ENCODE measurements at regions of chr14 and their contacts with region 1.

Region 1: DNA sequence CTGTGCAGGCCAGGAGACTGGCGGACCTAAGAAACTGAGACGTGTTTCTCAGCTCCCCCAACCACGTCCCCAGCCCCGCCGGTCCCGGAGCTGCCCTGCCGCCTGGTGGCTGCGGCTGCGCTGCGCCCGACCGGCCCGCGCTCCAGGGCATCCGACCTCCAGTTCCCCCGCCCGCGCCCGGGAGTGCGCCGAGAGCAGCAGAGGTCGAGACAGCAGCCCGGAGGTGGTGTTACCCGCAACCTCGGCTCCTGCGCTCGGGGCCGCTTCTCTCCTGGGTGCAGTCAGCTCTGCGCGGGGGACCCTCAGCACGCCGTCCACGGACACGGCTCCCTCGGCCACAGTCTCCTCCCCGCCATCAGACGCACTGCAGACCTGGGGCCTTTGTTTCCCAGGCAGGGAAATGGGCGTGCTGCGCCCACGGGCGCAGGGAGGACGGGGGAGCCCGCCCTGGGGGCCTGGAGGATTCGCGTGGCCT is 21.6 kb upstream of the GPR132 start:
- DNase-seq: peak; percentile 90
- H3K4me3 Mint-ChIP-seq: peak overlapping the region; percentile 75
- H3K27ac Mint-ChIP-seq: peak overlapping the region; percentile 14
- H3K4me1 Mint-ChIP-seq: peaks cover 21% of the 10 kb centered on the region
- H3K27me3 Mint-ChIP-seq: peaks cover 69% of the 10 kb centered on the region

Region 2: GRCh38 chr14:105065280-105066228 is 21.3 kb before region 1 on chr14 and contains the start of gene GPR132:
- CTCF ChIA-PET with region 1: interaction called, 111 read pairs
- DNase-seq: peak; percentile 96
- H3K4me3 Mint-ChIP-seq: peak within 1 kb of the TSS; percentile 83
- H3K27ac Mint-ChIP-seq: peak within 1 kb of the TSS; percentile 96
- H3K4me1 Mint-ChIP-seq: peaks cover 91% of the 10 kb centered on the region
- H3K27me3 Mint-ChIP-seq: no peaks in the 10 kb centered on the region

Region 3: GRCh38 chr14:105075379-105076295 is 11.2 kb before region 1 on chr14:
- CTCF ChIA-PET with region 1: interaction called, 12 read pairs
- DNase-seq: peak; percentile 77
- H3K4me3 Mint-ChIP-seq: no peak overlapping the region
- H3K27ac Mint-ChIP-seq: peak overlapping the region; percentile 37
- H3K4me1 Mint-ChIP-seq: peaks cover 31% of the 10 kb centered on the region
- H3K27me3 Mint-ChIP-seq: peaks cover 49% of the 10 kb centered on the region

Region 4: DNA sequence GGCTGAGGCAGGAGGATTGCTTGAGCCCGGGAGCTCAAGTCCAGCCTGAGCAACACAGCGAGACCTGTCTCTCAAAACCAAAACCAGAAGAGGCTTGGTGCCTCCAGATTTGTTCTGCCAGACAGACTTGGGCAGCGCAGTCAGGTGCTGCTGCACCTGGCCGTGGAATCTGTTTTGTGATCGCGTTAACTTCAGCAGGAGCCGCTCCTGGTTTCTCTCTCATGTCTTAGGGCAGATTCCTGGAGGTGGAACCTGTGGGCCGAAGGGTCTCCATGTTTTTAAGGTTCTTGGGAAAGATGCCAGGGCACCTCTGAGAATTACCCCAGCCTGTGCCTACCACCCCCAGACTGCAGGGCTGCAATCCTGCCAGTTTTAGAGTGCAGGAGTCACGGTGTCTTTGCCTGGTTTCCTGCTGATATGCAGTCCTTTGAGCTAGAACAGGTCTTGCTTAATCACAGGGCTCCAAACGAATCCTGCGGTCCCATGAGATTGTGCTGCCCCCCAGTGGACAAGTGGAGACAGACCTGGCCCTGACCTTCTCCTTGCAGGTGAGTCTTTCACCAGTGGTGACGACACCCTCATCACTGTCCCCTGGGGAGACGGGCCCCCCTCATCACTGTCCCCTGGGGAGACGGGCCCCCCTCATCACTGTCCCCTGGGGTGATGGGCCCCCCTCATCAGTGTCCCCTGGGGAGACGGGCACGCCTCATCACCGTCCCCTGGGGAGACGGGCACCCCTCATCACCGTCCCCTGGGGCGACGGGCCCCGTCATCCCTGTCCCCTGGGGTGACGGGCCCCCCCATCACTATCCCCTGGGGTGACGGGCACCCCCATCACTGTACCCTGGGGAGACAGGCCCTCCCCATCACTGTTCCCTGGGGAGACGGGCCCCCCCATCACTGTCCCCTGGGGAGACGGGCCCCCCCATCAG is 265.3 kb after region 1 on chr14:
- CTCF ChIA-PET with region 1: interaction called, 21 read pairs
- DNase-seq: peak; percentile 94
- H3K4me3 Mint-ChIP-seq: no peak overlapping the region
- H3K27ac Mint-ChIP-seq: no peak overlapping the region
- H3K4me1 Mint-ChIP-seq: peaks cover 3% of the 10 kb centered on the region
- H3K27me3 Mint-ChIP-seq: no peaks in the 10 kb centered on the region

Measured in activated naive CD4-positive, alpha-beta T cell treated with anti-CD3 and anti-CD28 coated beads, Interleukin-2, amount 10 ng/mL, durations not matched to agents 7 days and 5 days (primary cell).